Panc1 (cell line): ENCODE measurements at regions of chr11 and their contacts with region 1.

Region 1: DNA sequence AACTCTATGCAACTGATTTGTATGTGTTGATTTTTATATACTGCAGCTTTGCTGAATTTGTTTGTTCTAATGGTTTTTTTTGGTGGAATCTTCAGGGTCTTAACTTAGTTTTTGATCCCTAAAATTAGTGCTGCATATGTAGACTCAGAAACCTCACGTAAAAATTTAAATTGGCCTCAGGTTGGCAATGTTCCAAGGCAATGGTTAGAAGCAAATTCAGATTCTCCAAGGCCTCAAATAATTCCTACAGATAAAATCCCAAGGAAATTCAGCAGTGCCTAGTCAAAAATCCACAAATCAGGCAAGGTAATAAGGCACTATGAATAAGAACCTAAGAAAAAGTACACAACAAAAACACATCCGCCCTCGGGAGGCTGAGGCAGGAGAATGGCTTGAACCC is 9.5 kb downstream of the PDE3B start:
- DNase-seq: no peak
- ATAC-seq: no peak
- H3K4me3 ChIP-seq: no peak overlapping the region
- H3K27ac ChIP-seq: no peak overlapping the region
- H3K4me1 ChIP-seq: peaks cover 5% of the 10 kb centered on the region; the same call in 1 of the 2 replicates
- H3K27me3 ChIP-seq: no peaks in the 10 kb centered on the region
- CTCF ChIP-seq: no peak

Region 2: DNA sequence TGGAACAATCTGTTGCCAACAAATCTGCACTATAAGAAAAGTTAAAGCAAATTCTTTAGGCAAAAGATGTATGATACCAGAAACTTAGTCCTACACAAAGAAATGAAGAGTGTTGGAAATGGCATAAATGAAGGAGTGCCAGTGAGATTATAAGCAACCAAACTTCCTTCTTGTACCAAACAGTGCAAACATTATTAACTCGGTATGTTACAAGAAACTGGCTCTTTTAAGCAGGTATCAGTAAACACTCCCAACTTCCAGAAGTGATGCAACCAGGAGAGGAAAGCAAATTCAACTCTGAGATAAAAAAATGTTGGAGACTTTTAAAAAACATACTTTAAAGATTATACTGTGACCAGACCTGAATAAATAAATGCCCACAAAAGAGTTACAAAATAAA is 182.0 kb before region 1 on chr11:
- CTCF ChIA-PET with region 1: no interaction called
- POLR2A ChIA-PET with region 1: no interaction called
- in situ Hi-C with region 1: no loop called
- intact Hi-C with region 1: no loop called
- DNase-seq: no peak
- ATAC-seq: no peak
- H3K4me3 ChIP-seq: no peak overlapping the region
- H3K27ac ChIP-seq: no peak overlapping the region
- H3K4me1 ChIP-seq: no peaks in the 10 kb centered on the region
- H3K27me3 ChIP-seq: no peaks in the 10 kb centered on the region
- CTCF ChIP-seq: no peak

Region 3: GRCh38 chr11:14587258-14587657 is 65.8 kb before region 1 on chr11:
- CTCF ChIA-PET with region 1: interaction called, 11 read pairs
- POLR2A ChIA-PET with region 1: no interaction called
- in situ Hi-C with region 1: no loop called
- intact Hi-C with region 1: no loop called
- DNase-seq: no peak
- ATAC-seq: no peak
- H3K4me3 ChIP-seq: no peak overlapping the region
- H3K27ac ChIP-seq: no peak overlapping the region
- H3K4me1 ChIP-seq: no peaks in the 10 kb centered on the region
- H3K27me3 ChIP-seq: no peaks in the 10 kb centered on the region
- CTCF ChIP-seq: no peak